ENCODE measurements at regions of chr2 and their contacts with region 1.

Region 1: GRCh38 chr2:70142590-70143313 is 48.1 kb downstream of the C2orf42 start:
- DNase-seq: peak; percentile 99 to 100
- H3K4me3 ChIP-seq: peak overlapping the region; percentile 73 to 92
- H3K27ac ChIP-seq: peak overlapping the region; percentile 99 to 100
- H3K4me1 ChIP-seq: peaks cover 0 to 22% (median 14%) of the 10 kb centered on the region in 4 donors
- H3K27me3 ChIP-seq: no peaks in the 10 kb centered on the region
- CTCF ChIP-seq: peak; percentile 93 to 100

Region 2: DNA sequence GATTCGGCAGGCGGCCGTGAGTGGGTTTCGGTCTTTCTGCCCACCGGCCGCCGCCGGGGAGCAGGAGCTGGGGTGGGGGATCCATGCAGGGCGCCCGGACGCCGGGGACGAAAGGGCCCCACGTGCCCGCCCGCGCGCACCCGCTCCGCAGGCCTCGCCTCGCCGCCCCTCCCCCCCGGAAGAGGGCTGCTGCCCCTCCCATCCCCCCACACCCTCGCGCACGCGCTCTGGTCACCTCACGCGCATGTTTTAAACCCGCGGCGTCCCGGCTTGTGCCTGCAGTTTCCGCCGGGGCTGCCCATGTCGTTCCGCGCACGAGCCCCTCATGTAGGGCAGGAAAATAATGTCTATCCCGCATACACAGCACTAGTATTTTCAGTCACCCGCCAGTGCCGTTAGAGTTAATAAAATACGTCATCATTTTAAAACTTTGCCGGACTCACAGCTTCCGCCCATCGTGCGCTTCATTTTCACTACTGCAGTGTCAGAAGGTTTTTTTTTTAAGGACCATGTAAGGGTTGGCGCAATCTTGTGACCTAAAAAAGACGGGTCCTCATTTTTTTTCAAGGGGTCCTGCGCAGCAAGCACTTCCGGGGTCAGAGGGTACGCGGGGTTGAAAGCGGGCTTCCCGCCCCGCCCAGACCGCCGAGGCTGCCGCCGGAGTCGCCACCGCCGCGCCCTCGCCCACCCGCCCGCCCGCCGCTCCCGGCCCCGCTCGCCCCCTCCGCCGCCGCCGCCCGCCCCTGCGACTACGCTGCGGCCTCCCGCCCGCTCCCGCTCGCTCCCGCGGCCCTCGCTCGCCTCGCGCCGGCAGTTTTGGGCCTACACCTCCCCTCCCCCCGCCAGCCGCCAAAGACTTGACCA is 55.7 kb before region 1 on chr2 and contains the start of gene PCBP1:
- intact Hi-C with region 1: loop called (anchors 2 kb)
- DNase-seq: peak; percentile 94 to 97
- H3K4me3 ChIP-seq: peak within 1 kb of the TSS; percentile 71 to 95
- H3K27ac ChIP-seq: peak within 1 kb of the TSS; percentile 94 to 99
- H3K4me1 ChIP-seq: peaks cover 0 to 53% (median 40%) of the 10 kb centered on the region in 4 donors
- H3K27me3 ChIP-seq: no peaks in the 10 kb centered on the region
- CTCF ChIP-seq: no peak

Region 3: DNA sequence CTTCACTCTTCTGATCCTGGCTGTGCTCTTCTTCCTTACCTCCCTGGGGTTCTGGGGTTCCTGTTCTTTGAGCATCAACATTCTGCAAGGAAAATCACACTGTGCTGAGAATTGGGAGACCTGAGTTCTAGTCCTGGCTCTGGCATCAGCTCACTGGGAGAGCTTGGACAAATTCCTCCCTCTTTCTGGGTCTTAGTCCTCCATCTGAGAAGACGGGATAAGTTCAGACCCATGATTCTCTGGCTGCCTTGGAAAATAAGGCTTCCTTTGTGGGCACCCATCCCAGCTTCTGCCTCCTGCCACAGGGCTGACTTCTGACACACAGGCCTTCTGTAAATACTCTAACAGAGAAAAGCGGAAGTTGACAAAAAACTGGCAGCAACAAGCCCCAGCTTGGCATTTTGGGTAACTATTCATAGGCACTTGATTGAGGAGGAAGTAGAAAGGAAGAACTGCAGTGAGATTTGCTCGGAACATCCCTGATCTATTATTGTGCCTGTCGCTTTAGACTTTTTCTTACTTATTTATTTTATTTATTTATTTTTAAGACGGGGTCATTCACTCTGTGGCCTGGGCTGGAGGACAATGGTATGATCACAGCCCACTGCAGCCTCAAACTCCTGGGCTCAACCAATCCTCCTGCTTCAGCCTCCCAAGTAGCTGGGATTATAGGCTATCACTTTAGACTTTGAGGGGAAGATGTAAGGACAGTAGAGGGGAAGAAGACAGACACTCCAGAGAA is 47.6 kb before region 1 on chr2:
- intact Hi-C with region 1: loop called (anchors 2 kb)
- DNase-seq: peak; percentile 79 to 91
- H3K4me3 ChIP-seq: peak overlapping the region in 1 of 2 donors; percentile 7
- H3K27ac ChIP-seq: peak overlapping the region; percentile 89 to 95
- H3K4me1 ChIP-seq: peaks cover 0 to 34% (median 24%) of the 10 kb centered on the region in 4 donors
- H3K27me3 ChIP-seq: no peaks in the 10 kb centered on the region
- CTCF ChIP-seq: no peak

Region 4: DNA sequence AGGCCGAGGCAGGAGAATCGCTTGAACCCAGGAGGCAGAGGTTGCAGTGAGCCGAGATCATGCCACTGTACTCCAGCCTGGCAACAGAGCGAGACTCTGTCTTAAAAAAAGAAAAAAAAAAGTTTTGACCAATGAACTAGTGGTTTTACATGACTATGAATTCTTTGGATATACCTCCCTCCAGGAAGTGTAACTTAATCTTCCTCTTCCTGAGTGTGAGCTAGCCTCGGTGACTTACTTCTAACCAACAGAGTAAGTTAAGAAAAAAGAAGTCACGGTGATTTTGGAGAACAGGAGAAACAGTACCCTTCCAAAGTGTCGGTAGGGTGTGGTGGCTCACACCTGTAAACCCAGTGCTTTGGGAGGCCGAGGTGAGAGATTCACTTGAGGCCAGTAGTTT is 98.6 kb after region 1 on chr2:
- intact Hi-C with region 1: no loop called
- DNase-seq: no peak
- H3K4me3 ChIP-seq: no peak overlapping the region
- H3K27ac ChIP-seq: no peak overlapping the region
- H3K4me1 ChIP-seq: peaks cover 0 to 52% (median 26%) of the 10 kb centered on the region in 4 donors
- H3K27me3 ChIP-seq: no peaks in the 10 kb centered on the region
- CTCF ChIP-seq: no peak

Measured in tibial artery (tissue), 4 donors.